ENCODE measurements at regions of chr11 and their contacts with region 1.

Region 1: GRCh38 chr11:121829159-121829643 is 286.8 kb downstream of the BLID start:
- DNase-seq: peak; percentile 74
- H3K4me3 Mint-ChIP-seq: peak overlapping the region; percentile 41
- H3K27ac Mint-ChIP-seq: peak overlapping the region; percentile 71
- H3K4me1 Mint-ChIP-seq: peaks cover 13% of the 10 kb centered on the region
- H3K27me3 Mint-ChIP-seq: no peaks in the 10 kb centered on the region
- CTCF ChIP-seq: no peak

Region 2: GRCh38 chr11:121892131-121892681 is 63.0 kb after region 1 on chr11:
- CTCF ChIA-PET with region 1: no interaction called
- POLR2A ChIA-PET with region 1: interaction called, 3 read pairs
- intact Hi-C with region 1: loop called (anchors 5 kb)
- DNase-seq: peak; percentile 88
- H3K4me3 Mint-ChIP-seq: no peak overlapping the region
- H3K27ac Mint-ChIP-seq: peak overlapping the region; percentile 25
- H3K4me1 Mint-ChIP-seq: peaks cover 67% of the 10 kb centered on the region
- H3K27me3 Mint-ChIP-seq: no peaks in the 10 kb centered on the region
- CTCF ChIP-seq: no peak

Measured in MCF 10A (cell line).